K562 (cell line): ENCODE measurements at regions of chr11 and their contacts with region 1.

Region 1: GRCh38 chr11:67353317-67354074 is at the start of gene POLD4:
- DNase-seq: peak; percentile 98 to 99 (median 98)
- ATAC-seq: peak; percentile 94
- H3K4me3 ChIP-seq: peak within 1 kb of the TSS; percentile 76
- H3K27ac ChIP-seq: peak within 1 kb of the TSS; percentile 92
- H3K4me1 ChIP-seq: peaks cover 64% of the 10 kb centered on the region in 2 experiments
- H3K27me3 ChIP-seq: no peaks in the 10 kb centered on the region
- CTCF ChIP-seq: no peak
- EP300 ChIP-seq: no peak; the same call in 1 of the 2 replicates
- POLR2A ChIP-seq: peak; percentile 93
- RAD21 ChIP-seq: no peak
- polyA plus RNA-seq, gene POLD4: 5.8 to 6.1 TPM

Region 2: GRCh38 chr11:67373925-67374618 is 20.6 kb after region 1 on chr11:
- CTCF ChIA-PET with region 1: interaction called, 21 read pairs
- POLR2A ChIA-PET with region 1: interaction called, 15 read pairs
- in situ Hi-C with region 1: no loop called
- intact Hi-C with region 1: no loop called
- DNase-seq: peak; percentile 66 to 84 (median 70)
- ATAC-seq: peak; percentile 46
- H3K4me3 ChIP-seq: peak overlapping the region; percentile 96
- H3K27ac ChIP-seq: peak overlapping the region; percentile 95
- H3K4me1 ChIP-seq: peaks cover 59 to 81% of the 10 kb centered on the region in 2 experiments
- H3K27me3 ChIP-seq: no peaks in the 10 kb centered on the region
- CTCF ChIP-seq: peak; percentile 61 to 74 (median 67)
- EP300 ChIP-seq: no peak; the same call in 1 of the 2 replicates
- POLR2A ChIP-seq: peak; percentile 70
- RAD21 ChIP-seq: peak; percentile 30 to 58

Region 3: GRCh38 chr11:67382276-67383136 is 29.0 kb after region 1 on chr11:
- CTCF ChIA-PET with region 1: interaction called, 41 read pairs
- POLR2A ChIA-PET with region 1: interaction called, 15 read pairs
- in situ Hi-C with region 1: no loop called
- intact Hi-C with region 1: loop called (anchors 1 kb)
- DNase-seq: peak; percentile 68 to 91 (median 78)
- ATAC-seq: peak; percentile 88
- H3K4me3 ChIP-seq: no peak overlapping the region
- H3K27ac ChIP-seq: no peak overlapping the region
- H3K4me1 ChIP-seq: peaks cover 43 to 51% of the 10 kb centered on the region in 2 experiments
- H3K27me3 ChIP-seq: no peaks in the 10 kb centered on the region
- CTCF ChIP-seq: peak; percentile 97 to 99 (median 98)
- EP300 ChIP-seq: peak; percentile 28; the same call in 1 of the 2 replicates
- POLR2A ChIP-seq: no peak
- RAD21 ChIP-seq: peak; percentile 99

Region 4: DNA sequence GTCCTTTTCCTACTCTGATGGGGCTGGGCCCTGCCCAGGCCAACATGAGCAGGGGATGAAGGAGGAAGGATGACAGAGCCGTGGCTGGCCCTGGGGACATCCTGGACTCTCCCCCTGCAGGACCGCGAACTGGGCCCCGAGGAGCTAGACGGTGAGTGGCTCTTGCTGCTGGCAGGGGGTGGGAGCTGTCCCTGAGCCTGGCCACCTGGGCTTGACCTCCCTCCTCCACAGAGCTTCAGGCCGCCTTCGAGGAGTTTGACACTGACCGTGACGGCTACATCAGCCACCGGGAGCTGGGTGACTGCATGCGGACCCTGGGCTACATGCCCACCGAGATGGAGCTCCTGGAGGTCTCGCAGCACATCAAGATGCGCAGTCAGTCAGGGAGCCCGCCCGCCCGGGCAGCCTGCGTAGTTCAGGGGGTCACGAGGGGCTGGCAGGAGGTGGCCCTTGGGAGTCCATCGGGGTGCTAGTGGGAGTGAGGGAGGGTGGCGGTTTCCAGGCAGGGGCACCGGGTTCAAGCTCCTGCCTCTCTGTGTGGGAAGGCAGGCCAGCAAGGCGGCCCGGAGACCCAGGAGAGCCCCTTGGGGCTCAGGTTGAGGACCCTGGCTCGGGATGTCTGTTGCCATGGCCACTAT is 102.7 kb after region 1 on chr11:
- CTCF ChIA-PET with region 1: no interaction called
- POLR2A ChIA-PET with region 1: no interaction called
- in situ Hi-C with region 1: no loop called
- intact Hi-C with region 1: no loop called
- DNase-seq: peak in 1 of 4 experiments; percentile 22
- ATAC-seq: peak; percentile 39; the same call in 2 of the 3 replicates
- H3K4me3 ChIP-seq: no peak overlapping the region
- H3K27ac ChIP-seq: no peak overlapping the region
- H3K4me1 ChIP-seq: peaks cover 0 to 47% of the 10 kb centered on the region in 2 experiments; a peak in 2 of 5 replicates
- H3K27me3 ChIP-seq: no peaks in the 10 kb centered on the region
- CTCF ChIP-seq: no peak
- EP300 ChIP-seq: no peak
- POLR2A ChIP-seq: no peak
- RAD21 ChIP-seq: no peak

Region 5: GRCh38 chr11:67583247-67584204 is 230.0 kb after region 1 on chr11 and contains the start of gene GSTP1:
- CTCF ChIA-PET with region 1: no interaction called
- POLR2A ChIA-PET with region 1: no interaction called
- in situ Hi-C with region 1: no loop called
- intact Hi-C with region 1: loop called (anchors 5 kb)
- DNase-seq: peak; percentile 94 to 96 (median 94)
- ATAC-seq: peak; percentile 95
- H3K4me3 ChIP-seq: peak within 1 kb of the TSS; percentile 62
- H3K27ac ChIP-seq: peak within 1 kb of the TSS; percentile 89
- H3K4me1 ChIP-seq: peaks cover 33 to 49% of the 10 kb centered on the region in 2 experiments
- H3K27me3 ChIP-seq: no peaks in the 10 kb centered on the region
- CTCF ChIP-seq: peak; percentile 88 to 90 (median 89)
- EP300 ChIP-seq: no peak
- POLR2A ChIP-seq: peak; percentile 95
- RAD21 ChIP-seq: peak; percentile 68 to 70
- polyA plus RNA-seq, gene GSTP1: 739 to 1,204 TPM